ENCODE measurements at regions of chr22 and their contacts with region 1.

Region 1: GRCh38 chr22:20116951-20117645 is at the start of gene TRMT2A:
- DNase-seq: peak; percentile 97
- ATAC-seq: peak; percentile 81
- H3K4me3 Mint-ChIP-seq: peak within 1 kb of the TSS; percentile 91
- H3K27ac Mint-ChIP-seq: peak within 1 kb of the TSS; percentile 92
- H3K4me1 Mint-ChIP-seq: peaks cover 44% of the 10 kb centered on the region
- H3K27me3 Mint-ChIP-seq: no peaks in the 10 kb centered on the region
- CTCF ChIP-seq: no peak
- total RNA-seq, gene TRMT2A: 77.4 and 91.7 TPM in 2 replicates

Region 2: DNA sequence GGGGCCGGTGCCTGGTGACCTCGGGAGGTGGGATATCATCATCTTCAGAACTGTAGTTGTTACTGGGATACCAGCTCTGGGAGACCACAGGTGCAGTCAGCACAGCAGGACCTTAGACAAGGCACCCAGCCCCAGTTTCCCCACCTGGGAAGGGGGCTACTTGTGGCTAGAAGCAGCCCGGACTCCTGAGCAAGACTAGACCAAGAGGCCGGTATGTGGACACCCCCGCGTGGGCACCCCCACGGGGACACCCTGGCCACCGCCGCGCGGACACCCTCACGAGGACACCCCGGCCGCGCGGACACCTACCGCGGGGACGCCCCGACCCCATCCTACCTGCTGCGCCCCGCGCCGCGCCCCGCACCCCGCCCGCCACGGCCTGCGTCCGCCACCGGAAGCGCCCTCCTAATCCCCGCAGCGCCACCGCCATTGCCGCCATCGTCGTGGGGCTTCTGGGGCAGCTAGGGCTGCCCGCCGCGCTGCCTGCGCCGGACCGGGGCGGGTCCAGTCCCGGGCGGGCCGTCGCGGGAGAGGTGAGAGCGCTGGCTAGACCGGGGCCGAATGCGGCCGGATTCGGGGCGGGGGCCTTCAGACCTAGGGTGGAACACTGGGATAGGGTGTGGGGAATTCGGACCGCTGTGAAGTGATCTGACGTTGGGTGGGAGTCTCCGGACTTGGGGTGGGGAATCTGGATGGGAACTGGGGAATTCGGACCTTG is 175.6 kb before region 1 on chr22 and contains the starts of genes COMT and TXNRD2:
- CTCF ChIA-PET with region 1: no interaction called
- POLR2A ChIA-PET with region 1: interaction called, 3 read pairs
- intact Hi-C with region 1: loop called (anchors 1 kb)
- DNase-seq: peak; percentile 76
- ATAC-seq: peak; percentile 85
- H3K4me3 Mint-ChIP-seq: peak within 1 kb of the TSS; percentile 94
- H3K27ac Mint-ChIP-seq: peak within 1 kb of the TSS; percentile 94
- H3K4me1 Mint-ChIP-seq: peaks cover 46% of the 10 kb centered on the region
- H3K27me3 Mint-ChIP-seq: no peaks in the 10 kb centered on the region
- CTCF ChIP-seq: no peak
- total RNA-seq, gene COMT: 40.6 and 49.5 TPM in 2 replicates
- total RNA-seq, gene TXNRD2: 24.4 and 31.2 TPM in 2 replicates

Region 3: DNA sequence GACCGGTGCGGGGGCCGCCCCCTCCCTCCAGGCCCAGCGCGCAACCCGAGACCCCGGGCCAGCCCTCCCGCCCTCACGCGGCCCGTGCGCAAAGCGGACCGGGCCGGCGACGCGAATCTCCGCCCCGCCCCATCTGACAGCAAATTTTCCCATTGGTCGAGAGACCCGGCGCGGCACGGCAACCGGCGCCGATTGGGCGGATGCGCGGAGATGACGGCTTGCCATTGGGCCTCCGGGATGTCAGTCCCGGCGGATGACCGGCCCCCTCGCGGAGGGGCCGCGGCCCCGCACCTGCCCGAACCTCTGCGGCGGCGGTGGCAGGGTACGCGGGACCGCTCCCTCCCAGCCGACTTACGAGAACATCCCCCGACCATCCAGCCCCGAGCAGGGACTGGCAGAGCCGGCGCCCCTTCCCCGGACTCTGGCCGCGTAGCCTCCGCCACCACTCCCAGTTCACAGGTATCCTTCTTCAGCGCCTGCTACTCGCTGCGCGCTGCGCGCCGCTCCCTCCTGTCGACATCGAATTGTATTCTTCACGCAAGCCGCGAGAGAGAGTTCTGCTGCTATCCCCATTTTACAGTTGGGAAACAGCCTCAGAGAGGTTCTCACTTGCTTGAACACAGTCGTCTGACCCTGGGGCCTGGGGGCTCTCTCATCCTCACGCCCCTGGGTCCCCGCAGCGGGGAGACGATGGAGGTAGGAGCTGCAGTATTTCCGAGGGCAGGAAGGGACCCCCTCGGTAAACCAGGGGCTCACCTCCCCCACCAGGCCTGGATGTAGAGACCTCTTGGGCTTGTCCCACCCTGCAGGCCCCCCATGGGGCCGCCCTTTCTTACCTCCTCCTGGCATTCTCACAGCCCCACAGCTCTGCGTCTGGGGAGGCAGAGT is 100.1 kb before region 1 on chr22 and contains the start of gene ARVCF:
- CTCF ChIA-PET with region 1: no interaction called
- POLR2A ChIA-PET with region 1: interaction called, 7 read pairs
- intact Hi-C with region 1: loop called (anchors 1 kb)
- DNase-seq: peak; percentile 94
- ATAC-seq: peak; percentile 67
- H3K4me3 Mint-ChIP-seq: peak within 1 kb of the TSS; percentile 87
- H3K27ac Mint-ChIP-seq: peak within 1 kb of the TSS; percentile 53
- H3K4me1 Mint-ChIP-seq: peaks cover 21% of the 10 kb centered on the region
- H3K27me3 Mint-ChIP-seq: no peaks in the 10 kb centered on the region
- CTCF ChIP-seq: no peak
- total RNA-seq, gene ARVCF: 2.3 and 6.5 TPM in 2 replicates

Region 4: GRCh38 chr22:20061481-20061861 is 55.6 kb before region 1 on chr22:
- CTCF ChIA-PET with region 1: no interaction called
- POLR2A ChIA-PET with region 1: no interaction called
- intact Hi-C with region 1: no loop called
- DNase-seq: no peak
- ATAC-seq: no peak
- H3K4me3 Mint-ChIP-seq: no peak overlapping the region
- H3K27ac Mint-ChIP-seq: no peak overlapping the region
- H3K4me1 Mint-ChIP-seq: no peaks in the 10 kb centered on the region
- H3K27me3 Mint-ChIP-seq: no peaks in the 10 kb centered on the region
- CTCF ChIP-seq: no peak

Region 5: DNA sequence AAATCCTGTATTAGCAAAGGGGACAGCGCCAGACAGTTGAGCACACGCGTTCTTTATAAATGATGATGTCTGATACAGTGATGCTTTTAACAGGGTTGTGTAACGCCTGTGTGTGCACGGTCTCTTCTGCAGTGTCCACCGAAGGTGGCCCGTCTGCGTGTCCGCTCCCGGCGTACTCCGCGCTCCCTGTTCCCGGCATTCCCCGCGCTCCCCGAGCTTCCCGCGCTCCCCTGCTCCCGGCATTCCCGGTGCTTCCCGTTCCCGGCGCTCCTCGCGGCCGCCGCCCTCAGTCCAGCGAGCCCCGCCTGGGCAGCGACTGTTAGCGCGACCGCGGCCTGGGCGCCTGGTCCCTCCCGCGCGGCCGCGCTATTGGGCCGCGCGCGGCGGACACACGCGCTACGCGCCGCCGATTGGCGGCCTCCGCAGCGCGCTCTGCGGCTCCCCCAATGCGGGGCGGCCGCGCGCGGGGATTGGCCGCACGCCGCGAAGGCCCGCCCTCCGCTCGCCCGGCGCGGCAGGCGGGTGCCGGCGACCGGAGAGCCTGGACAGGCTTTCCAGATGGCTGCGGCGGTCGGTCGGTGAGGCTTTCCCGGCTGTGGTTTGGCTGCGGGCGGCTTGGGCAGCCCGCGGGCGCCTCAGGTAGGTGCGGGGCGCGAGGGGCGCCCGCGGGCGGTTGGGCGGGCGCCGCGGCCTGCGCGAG is 37.2 kb before region 1 on chr22 and contains the start of gene DGCR8:
- CTCF ChIA-PET with region 1: no interaction called
- POLR2A ChIA-PET with region 1: no interaction called
- intact Hi-C with region 1: loop called (anchors 1 kb)
- DNase-seq: peak; percentile 83
- ATAC-seq: peak; percentile 97
- H3K4me3 Mint-ChIP-seq: peak within 1 kb of the TSS; percentile 90
- H3K27ac Mint-ChIP-seq: peak within 1 kb of the TSS; percentile 80
- H3K4me1 Mint-ChIP-seq: peaks cover 32% of the 10 kb centered on the region
- H3K27me3 Mint-ChIP-seq: no peaks in the 10 kb centered on the region
- CTCF ChIP-seq: no peak
- total RNA-seq, gene DGCR8: 34.6 and 35.5 TPM in 2 replicates

Region 6: GRCh38 chr22:20298803-20299735 is 182.0 kb after region 1 on chr22:
- CTCF ChIA-PET with region 1: no interaction called
- POLR2A ChIA-PET with region 1: no interaction called
- intact Hi-C with region 1: loop called (anchors 1 kb)
- DNase-seq: peak; percentile 89
- ATAC-seq: peak; percentile 90
- H3K4me3 Mint-ChIP-seq: peak overlapping the region; percentile 86
- H3K27ac Mint-ChIP-seq: no peak overlapping the region
- H3K4me1 Mint-ChIP-seq: no peaks in the 10 kb centered on the region
- H3K27me3 Mint-ChIP-seq: peaks cover 7% of the 10 kb centered on the region
- CTCF ChIP-seq: no peak

Region 7: DNA sequence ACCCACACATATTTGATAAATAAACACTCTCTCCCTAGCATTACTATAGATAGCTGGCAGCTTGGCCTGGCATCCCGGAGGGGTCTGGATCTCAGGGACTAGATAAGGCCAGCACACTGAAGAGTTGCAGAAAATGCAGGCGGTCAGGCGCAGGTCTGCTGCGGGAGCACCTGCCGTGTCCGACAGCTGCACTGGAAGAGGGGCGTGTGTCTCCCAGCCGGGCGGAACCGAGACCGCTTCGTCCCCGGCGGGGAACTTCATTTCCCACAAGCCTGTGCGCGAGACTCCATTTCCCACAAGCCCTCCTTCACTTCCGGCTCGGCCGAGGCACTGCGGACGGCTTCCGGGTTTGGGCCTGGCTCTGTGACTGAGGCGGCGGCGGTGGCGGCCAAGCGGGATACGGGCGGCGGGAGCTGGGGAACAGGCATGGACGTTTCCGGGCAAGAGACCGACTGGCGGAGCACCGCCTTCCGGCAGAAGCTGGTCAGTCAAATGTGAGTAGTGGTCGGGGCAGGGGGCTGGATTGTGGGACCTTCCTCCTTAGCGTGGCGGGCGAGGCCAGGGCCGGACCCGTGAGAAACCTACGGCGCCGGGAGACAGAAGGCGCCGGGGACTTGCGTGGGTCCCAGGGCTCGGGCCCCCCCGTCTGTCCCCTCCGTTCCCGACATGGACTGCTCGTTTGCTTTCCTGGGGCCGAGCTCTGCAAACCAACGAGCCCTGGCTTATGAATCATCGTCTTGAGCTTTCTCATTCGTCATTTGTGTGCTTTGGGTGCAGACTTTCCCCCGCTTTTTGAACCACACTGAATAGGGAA is 390.4 kb after region 1 on chr22 and contains the start of gene MED15:
- CTCF ChIA-PET with region 1: no interaction called
- POLR2A ChIA-PET with region 1: interaction called, 5 read pairs
- intact Hi-C with region 1: loop called (anchors 5 kb)
- DNase-seq: peak; percentile 85
- ATAC-seq: peak; percentile 82
- H3K4me3 Mint-ChIP-seq: peak within 1 kb of the TSS; percentile 96
- H3K27ac Mint-ChIP-seq: peak within 1 kb of the TSS; percentile 94
- H3K4me1 Mint-ChIP-seq: peaks cover 52% of the 10 kb centered on the region
- H3K27me3 Mint-ChIP-seq: no peaks in the 10 kb centered on the region
- CTCF ChIP-seq: no peak
- total RNA-seq, gene MED15: 112 and 127 TPM in 2 replicates

Measured in activated B cell treated with CpG ODN at 0.5 μM for 24 hours (primary cell).